CD4-positive, alpha-beta memory T cell (primary cell): ENCODE measurements at regions of chr16 and their contacts with region 1.

Region 1: GRCh38 chr16:56600398-56600999 is 7.9 kb upstream of the MT2A start:
- DNase-seq: peak in 4 of 5 donors; percentile 38 to 43 (median 41)
- H3K4me3 ChIP-seq: no peak overlapping the region
- H3K4me3 Mint-ChIP-seq: no peak overlapping the region
- H3K27ac ChIP-seq: no peak overlapping the region
- H3K27ac Mint-ChIP-seq: peak overlapping the region in 3 of 7 donors; percentile 37 to 80 (median 66)
- H3K4me1 ChIP-seq: no peaks in the 10 kb centered on the region
- H3K4me1 Mint-ChIP-seq: peaks cover 0 to 7% (median 6%) of the 10 kb centered on the region in 4 donors
- H3K27me3 ChIP-seq: no peaks in the 10 kb centered on the region
- H3K27me3 Mint-ChIP-seq: peaks cover 6 to 12% of the 10 kb centered on the region in 2 donors

Region 2: DNA sequence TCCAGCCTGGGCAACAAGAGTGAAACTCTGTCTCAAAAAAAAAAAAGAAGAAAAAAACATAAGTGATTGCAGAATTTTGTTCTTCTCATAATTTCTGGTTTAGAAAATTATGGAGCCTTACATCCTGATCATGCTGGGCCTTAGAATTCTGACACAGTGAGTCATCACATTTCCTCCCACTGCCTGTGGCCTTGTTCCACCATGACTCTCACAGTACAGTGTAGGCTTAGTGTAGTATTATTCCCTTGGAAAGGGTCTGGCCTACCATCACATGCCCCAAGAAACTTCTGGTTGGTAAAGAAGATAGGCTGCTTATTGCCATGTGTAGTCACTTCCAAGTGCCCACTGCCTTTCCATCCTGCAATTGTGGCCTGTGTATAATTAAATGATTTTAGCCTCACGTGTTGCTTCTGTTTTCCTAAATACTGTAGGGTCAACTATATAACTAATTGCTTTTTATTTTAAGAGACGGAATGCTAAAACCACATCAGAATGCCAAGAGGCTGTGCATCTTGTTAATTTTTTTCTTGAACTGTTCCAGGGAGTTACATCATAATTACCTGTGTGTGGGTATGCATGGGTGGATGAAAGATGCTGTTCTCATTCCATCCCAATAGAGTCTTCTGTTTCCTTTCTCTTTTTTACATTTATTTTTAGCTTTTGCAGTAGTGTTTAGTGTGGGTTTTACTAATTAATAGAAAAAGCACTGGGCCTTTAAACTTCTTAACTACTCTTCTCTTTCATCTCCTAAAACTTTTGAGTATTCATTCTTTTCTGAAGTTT is 123.2 kb before region 1 on chr16:
- CTCF ChIA-PET with region 1: no interaction called
- POLR2A ChIA-PET with region 1: no interaction called
- intact Hi-C with region 1: no loop called
- DNase-seq: no peak
- H3K4me3 ChIP-seq: no peak overlapping the region
- H3K4me3 Mint-ChIP-seq: no peak overlapping the region
- H3K27ac ChIP-seq: no peak overlapping the region
- H3K27ac Mint-ChIP-seq: peak overlapping the region in 5 of 7 donors; percentile 6 to 64 (median 38)
- H3K4me1 ChIP-seq: no peaks in the 10 kb centered on the region
- H3K4me1 Mint-ChIP-seq: peaks cover 0 to 11% (median 2%) of the 10 kb centered on the region in 4 donors
- H3K27me3 ChIP-seq: no peaks in the 10 kb centered on the region
- H3K27me3 Mint-ChIP-seq: no peaks in the 10 kb centered on the region

Region 3: GRCh38 chr16:56513972-56514371 is 86.5 kb before region 1 on chr16:
- CTCF ChIA-PET with region 1: interaction called, 3 read pairs
- POLR2A ChIA-PET with region 1: no interaction called
- intact Hi-C with region 1: loop called (anchors 1 kb)
- DNase-seq: peak; percentile 40 to 69 (median 53)
- H3K4me3 ChIP-seq: no peak overlapping the region
- H3K4me3 Mint-ChIP-seq: peak overlapping the region in 1 of 8 donors; percentile 1
- H3K27ac ChIP-seq: no peak overlapping the region
- H3K27ac Mint-ChIP-seq: peak overlapping the region in 2 of 7 donors; percentile 2 to 9
- H3K4me1 ChIP-seq: peaks cover 21% of the 10 kb centered on the region
- H3K4me1 Mint-ChIP-seq: peaks cover 41 to 61% (median 46%) of the 10 kb centered on the region in 4 donors
- H3K27me3 ChIP-seq: no peaks in the 10 kb centered on the region
- H3K27me3 Mint-ChIP-seq: no peaks in the 10 kb centered on the region

Region 4: DNA sequence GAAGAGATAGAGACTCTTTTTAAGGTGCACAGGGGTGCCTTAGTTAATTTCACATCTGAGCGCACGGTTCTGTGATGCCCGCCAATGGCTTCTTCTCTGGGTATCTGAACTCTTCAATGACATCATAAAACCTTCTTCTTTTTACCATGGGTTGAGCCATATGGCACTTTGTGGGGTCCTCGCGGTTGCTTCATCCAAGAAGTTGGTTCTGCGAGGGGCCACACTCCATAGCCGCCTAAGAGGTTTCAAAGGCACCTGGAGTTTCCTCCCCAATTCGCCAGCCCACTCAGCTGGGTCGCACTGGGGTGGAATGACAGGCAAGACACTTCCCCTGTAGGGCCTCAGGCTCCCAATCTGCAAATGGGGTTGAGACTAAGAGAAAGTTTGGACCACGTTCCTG is 46.1 kb before region 1 on chr16:
- CTCF ChIA-PET with region 1: no interaction called
- POLR2A ChIA-PET with region 1: no interaction called
- intact Hi-C with region 1: no loop called
- DNase-seq: no peak
- H3K4me3 ChIP-seq: no peak overlapping the region
- H3K4me3 Mint-ChIP-seq: no peak overlapping the region
- H3K27ac ChIP-seq: no peak overlapping the region
- H3K27ac Mint-ChIP-seq: no peak overlapping the region
- H3K4me1 ChIP-seq: no peaks in the 10 kb centered on the region
- H3K4me1 Mint-ChIP-seq: peaks cover 0 to 4% (median 0%) of the 10 kb centered on the region in 4 donors
- H3K27me3 ChIP-seq: no peaks in the 10 kb centered on the region
- H3K27me3 Mint-ChIP-seq: peaks cover 12 to 18% of the 10 kb centered on the region in 2 donors

Region 5: GRCh38 chr16:56643080-56643778 is 42.7 kb after region 1 on chr16:
- CTCF ChIA-PET with region 1: interaction called, 22 read pairs
- POLR2A ChIA-PET with region 1: interaction called, 3 read pairs
- intact Hi-C with region 1: no loop called
- DNase-seq: peak; percentile 63 to 76 (median 71)
- H3K4me3 ChIP-seq: peak overlapping the region in 1 of 2 donors; percentile 0
- H3K4me3 Mint-ChIP-seq: peak overlapping the region; percentile 75 to 84 (median 79)
- H3K27ac ChIP-seq: no peak overlapping the region
- H3K27ac Mint-ChIP-seq: peak overlapping the region in 5 of 7 donors; percentile 63 to 77 (median 67)
- H3K4me1 ChIP-seq: peaks cover 16% of the 10 kb centered on the region
- H3K4me1 Mint-ChIP-seq: peaks cover 18 to 22% (median 19%) of the 10 kb centered on the region in 4 donors
- H3K27me3 ChIP-seq: peaks cover 14% of the 10 kb centered on the region
- H3K27me3 Mint-ChIP-seq: peaks cover 12 to 23% of the 10 kb centered on the region in 2 donors

Region 6: GRCh38 chr16:56909527-56909979 is 309.1 kb after region 1 on chr16:
- CTCF ChIA-PET with region 1: no interaction called
- POLR2A ChIA-PET with region 1: no interaction called
- intact Hi-C with region 1: no loop called
- DNase-seq: no peak
- H3K4me3 ChIP-seq: no peak overlapping the region
- H3K4me3 Mint-ChIP-seq: no peak overlapping the region
- H3K27ac ChIP-seq: no peak overlapping the region
- H3K27ac Mint-ChIP-seq: no peak overlapping the region
- H3K4me1 ChIP-seq: peaks cover 10% of the 10 kb centered on the region
- H3K4me1 Mint-ChIP-seq: peaks cover 4 to 9% (median 6%) of the 10 kb centered on the region in 4 donors
- H3K27me3 ChIP-seq: no peaks in the 10 kb centered on the region
- H3K27me3 Mint-ChIP-seq: peaks cover 1 to 6% of the 10 kb centered on the region in 2 donors